Naive thymus-derived CD4-positive, alpha-beta T cell (primary cell): ENCODE measurements at regions of chr9 and their contacts with region 1.

Region 1: GRCh38 chr9:86354011-86354817 is at the start of gene TUT7:
- DNase-seq: peak; percentile 90 to 99 (median 94)
- ATAC-seq: peak; percentile 98
- H3K4me3 ChIP-seq: peak within 1 kb of the TSS; percentile 95
- H3K4me3 Mint-ChIP-seq: peak within 1 kb of the TSS; percentile 80 to 97 (median 95)
- H3K27ac ChIP-seq: peak within 1 kb of the TSS; percentile 84
- H3K27ac Mint-ChIP-seq: peak within 1 kb of the TSS; percentile 85 to 97 (median 94)
- H3K4me1 ChIP-seq: peaks cover 7 to 14% of the 10 kb centered on the region in 2 donors
- H3K4me1 Mint-ChIP-seq: peaks cover 28 to 57% (median 50%) of the 10 kb centered on the region in 7 donors
- H3K27me3 ChIP-seq: no peaks in the 10 kb centered on the region
- H3K27me3 Mint-ChIP-seq: peaks cover 0 to 10% (median 0%) of the 10 kb centered on the region in 5 donors
- total RNA-seq, gene TUT7: 38.5 to 57.4 (median 49.0) TPM

Region 2: DNA sequence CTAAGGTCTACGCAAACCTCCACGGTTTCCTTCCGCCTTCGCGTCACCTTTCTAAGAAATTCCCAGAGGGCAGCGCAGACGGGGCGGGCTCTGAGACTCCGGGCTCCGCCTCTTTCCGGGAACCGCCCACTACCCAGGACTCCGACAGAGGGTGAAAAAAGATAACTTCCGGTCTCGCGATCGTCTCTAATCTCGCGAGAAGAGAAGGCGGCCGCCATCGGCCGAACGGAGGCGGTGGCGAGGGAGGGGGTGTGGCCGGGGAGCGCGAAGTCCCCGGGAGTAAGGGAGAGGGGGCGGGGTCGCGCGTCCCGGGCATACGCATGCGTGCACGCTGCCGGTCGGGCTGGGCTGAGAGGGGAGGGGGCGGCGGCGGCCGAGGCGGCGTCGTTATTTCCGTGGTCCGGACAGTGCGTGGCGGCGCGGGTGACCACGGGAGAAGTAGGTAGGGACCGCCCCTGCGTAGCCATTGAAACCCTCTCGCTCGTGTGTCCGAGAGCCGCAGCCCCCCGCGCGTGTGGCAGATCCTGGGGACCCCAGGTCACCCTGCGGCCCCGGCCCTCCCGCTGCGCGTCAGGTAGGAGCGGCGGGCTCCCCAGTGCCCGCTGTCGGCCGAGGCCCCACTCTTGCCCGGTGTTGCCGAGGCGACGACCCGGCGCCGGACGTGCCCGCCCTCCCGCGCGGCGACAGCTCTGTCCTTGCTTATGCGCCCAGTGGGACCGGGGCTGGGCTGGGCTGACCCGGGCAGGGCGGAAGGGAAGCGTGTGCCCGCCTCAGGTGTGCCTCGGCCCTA is 413.2 kb before region 1 on chr9 and contains the start of gene NAA35:
- CTCF ChIA-PET with region 1: no interaction called
- POLR2A ChIA-PET with region 1: no interaction called
- intact Hi-C with region 1: loop called (anchors 1 kb)
- DNase-seq: peak; percentile 95 to 99 (median 99)
- ATAC-seq: peak; percentile 94
- H3K4me3 ChIP-seq: peak within 1 kb of the TSS; percentile 75
- H3K4me3 Mint-ChIP-seq: peak within 1 kb of the TSS in 6 of 10 donors; percentile 83 to 95 (median 90)
- H3K27ac ChIP-seq: peak within 1 kb of the TSS; percentile 96
- H3K27ac Mint-ChIP-seq: peak within 1 kb of the TSS in 8 of 9 donors; percentile 90 to 97 (median 95)
- H3K4me1 ChIP-seq: peaks cover 25 to 26% of the 10 kb centered on the region in 2 donors
- H3K4me1 Mint-ChIP-seq: peaks cover 0 to 21% (median 12%) of the 10 kb centered on the region in 7 donors
- H3K27me3 ChIP-seq: no peaks in the 10 kb centered on the region
- H3K27me3 Mint-ChIP-seq: peaks cover 0 to 3% (median 0%) of the 10 kb centered on the region in 5 donors
- total RNA-seq, gene NAA35: 18.2 to 28.6 (median 26.0) TPM

Region 3: GRCh38 chr9:86303316-86303975 is 50.8 kb before region 1 on chr9:
- CTCF ChIA-PET with region 1: no interaction called
- POLR2A ChIA-PET with region 1: no interaction called
- intact Hi-C with region 1: loop called (anchors 1 kb)
- DNase-seq: peak in 7 of 9 donors; percentile 8 to 45 (median 33)
- ATAC-seq: peak; percentile 79
- H3K4me3 ChIP-seq: no peak overlapping the region
- H3K4me3 Mint-ChIP-seq: peak overlapping the region in 7 of 10 donors; percentile 5 to 72 (median 42)
- H3K27ac ChIP-seq: peak overlapping the region; percentile 34
- H3K27ac Mint-ChIP-seq: peak overlapping the region; percentile 37 to 87 (median 75)
- H3K4me1 ChIP-seq: no peaks in the 10 kb centered on the region
- H3K4me1 Mint-ChIP-seq: peaks cover 9 to 37% (median 26%) of the 10 kb centered on the region in 7 donors
- H3K27me3 ChIP-seq: no peaks in the 10 kb centered on the region
- H3K27me3 Mint-ChIP-seq: no peaks in the 10 kb centered on the region

Region 4: DNA sequence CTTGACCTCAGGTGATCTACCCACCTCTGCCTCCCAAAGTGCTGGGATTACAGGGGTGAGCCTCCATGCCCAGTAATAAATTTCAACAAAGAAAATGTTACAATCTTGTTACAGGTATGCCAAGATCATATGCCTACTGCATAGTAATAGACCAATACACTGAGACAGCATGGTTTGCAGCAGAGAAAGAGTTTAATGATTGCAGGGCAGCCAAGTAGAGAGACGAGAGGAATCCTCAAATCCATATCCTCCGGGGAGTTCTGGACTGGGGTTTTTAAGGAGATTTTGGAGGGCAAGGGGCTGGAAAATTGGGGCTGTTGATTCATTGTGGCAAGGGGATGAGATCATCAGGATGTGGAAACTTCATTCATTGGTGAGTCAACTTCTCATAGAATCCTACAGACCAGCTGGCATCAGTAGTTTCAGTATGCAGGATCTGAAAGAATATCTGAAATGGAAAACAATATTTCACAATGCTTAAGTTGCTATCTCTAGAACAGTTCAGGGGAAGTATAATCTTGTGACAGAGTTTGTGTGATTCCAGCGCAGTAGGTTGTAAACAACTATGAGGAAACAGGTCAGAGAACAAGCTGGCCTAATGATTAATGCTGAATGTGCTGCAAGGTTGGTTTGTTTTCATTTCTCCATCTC is 14.8 kb after region 1 on chr9:
- CTCF ChIA-PET with region 1: no interaction called
- POLR2A ChIA-PET with region 1: no interaction called
- intact Hi-C with region 1: no loop called
- DNase-seq: no peak
- ATAC-seq: peak; percentile 78
- H3K4me3 ChIP-seq: no peak overlapping the region
- H3K4me3 Mint-ChIP-seq: no peak overlapping the region
- H3K27ac ChIP-seq: no peak overlapping the region
- H3K27ac Mint-ChIP-seq: no peak overlapping the region
- H3K4me1 ChIP-seq: no peaks in the 10 kb centered on the region
- H3K4me1 Mint-ChIP-seq: no peaks in the 10 kb centered on the region
- H3K27me3 ChIP-seq: no peaks in the 10 kb centered on the region
- H3K27me3 Mint-ChIP-seq: peaks cover 11 to 30% (median 21%) of the 10 kb centered on the region in 5 donors

Region 5: DNA sequence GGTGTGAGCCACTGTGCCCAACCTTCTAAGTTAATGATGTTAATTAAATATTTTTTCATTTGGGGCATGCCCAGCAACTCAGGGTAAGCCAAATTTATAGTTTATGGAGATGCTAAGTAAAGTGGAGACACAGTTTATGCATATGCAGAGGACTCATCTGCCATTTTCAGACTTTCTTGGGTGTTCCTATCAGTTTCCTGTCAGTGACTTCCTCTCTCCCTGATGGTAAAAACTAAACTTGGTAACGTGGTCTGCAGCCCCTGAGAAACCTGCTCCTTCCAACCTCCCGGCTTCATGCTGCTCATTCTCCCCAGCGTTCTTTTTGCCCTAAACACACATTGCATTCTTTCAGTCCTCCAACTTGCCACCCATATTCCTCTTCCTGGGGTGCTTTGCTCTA is 48.4 kb after region 1 on chr9:
- CTCF ChIA-PET with region 1: no interaction called
- POLR2A ChIA-PET with region 1: no interaction called
- intact Hi-C with region 1: loop called in 1 of 2 experiments (anchors 5 kb)
- DNase-seq: no peak
- ATAC-seq: no peak
- H3K4me3 ChIP-seq: no peak overlapping the region
- H3K4me3 Mint-ChIP-seq: no peak overlapping the region
- H3K27ac ChIP-seq: no peak overlapping the region
- H3K27ac Mint-ChIP-seq: peak overlapping the region in 1 of 9 donors; percentile 2
- H3K4me1 ChIP-seq: no peaks in the 10 kb centered on the region
- H3K4me1 Mint-ChIP-seq: peaks cover 0 to 6% (median 0%) of the 10 kb centered on the region in 7 donors
- H3K27me3 ChIP-seq: no peaks in the 10 kb centered on the region
- H3K27me3 Mint-ChIP-seq: peaks cover under 1 to 18% (median 8%) of the 10 kb centered on the region in 5 donors